Endothelial cell of umbilical vein (primary cell): ENCODE measurements at regions of chr2 and their contacts with region 1.

Region 1: GRCh38 chr2:63861220-63861822 is 19.6 kb downstream of the UGP2 start:
- DNase-seq: peak; percentile 79
- H3K4me3 ChIP-seq: no peak overlapping the region
- H3K27ac ChIP-seq: no peak overlapping the region
- H3K4me1 ChIP-seq: no peaks in the 10 kb centered on the region
- H3K27me3 ChIP-seq: no peaks in the 10 kb centered on the region
- CTCF ChIP-seq: peak; percentile 42 to 50
- POLR2A ChIP-seq: no peak

Region 2: GRCh38 chr2:63692002-63692606 is 169.2 kb before region 1 on chr2:
- CTCF ChIA-PET with region 1: interaction called, 178 read pairs
- POLR2A ChIA-PET with region 1: no interaction called
- dilution Hi-C with region 1: no loop called
- intact Hi-C with region 1: loop called (anchors 1 kb)
- DNase-seq: peak; percentile 78
- H3K4me3 ChIP-seq: no peak overlapping the region
- H3K27ac ChIP-seq: no peak overlapping the region
- H3K4me1 ChIP-seq: no peaks in the 10 kb centered on the region
- H3K27me3 ChIP-seq: no peaks in the 10 kb centered on the region
- CTCF ChIP-seq: peak; percentile 17 to 19
- POLR2A ChIP-seq: no peak

Region 3: GRCh38 chr2:63736354-63736753 is 125.0 kb before region 1 on chr2:
- CTCF ChIA-PET with region 1: interaction called, 11 read pairs
- POLR2A ChIA-PET with region 1: no interaction called
- dilution Hi-C with region 1: no loop called
- intact Hi-C with region 1: no loop called
- DNase-seq: peak; percentile 67
- H3K4me3 ChIP-seq: no peak overlapping the region
- H3K27ac ChIP-seq: peak overlapping the region; percentile 48
- H3K4me1 ChIP-seq: peaks cover 38% of the 10 kb centered on the region
- H3K27me3 ChIP-seq: no peaks in the 10 kb centered on the region
- CTCF ChIP-seq: no peak
- POLR2A ChIP-seq: no peak

Region 4: GRCh38 chr2:63849381-63850203 is 11.7 kb before region 1 on chr2:
- CTCF ChIA-PET with region 1: interaction called, 23 read pairs
- POLR2A ChIA-PET with region 1: no interaction called
- dilution Hi-C with region 1: no loop called
- intact Hi-C with region 1: no loop called
- DNase-seq: no peak
- H3K4me3 ChIP-seq: no peak overlapping the region
- H3K27ac ChIP-seq: no peak overlapping the region
- H3K4me1 ChIP-seq: no peaks in the 10 kb centered on the region
- H3K27me3 ChIP-seq: no peaks in the 10 kb centered on the region
- CTCF ChIP-seq: no peak
- POLR2A ChIP-seq: no peak

Region 5: DNA sequence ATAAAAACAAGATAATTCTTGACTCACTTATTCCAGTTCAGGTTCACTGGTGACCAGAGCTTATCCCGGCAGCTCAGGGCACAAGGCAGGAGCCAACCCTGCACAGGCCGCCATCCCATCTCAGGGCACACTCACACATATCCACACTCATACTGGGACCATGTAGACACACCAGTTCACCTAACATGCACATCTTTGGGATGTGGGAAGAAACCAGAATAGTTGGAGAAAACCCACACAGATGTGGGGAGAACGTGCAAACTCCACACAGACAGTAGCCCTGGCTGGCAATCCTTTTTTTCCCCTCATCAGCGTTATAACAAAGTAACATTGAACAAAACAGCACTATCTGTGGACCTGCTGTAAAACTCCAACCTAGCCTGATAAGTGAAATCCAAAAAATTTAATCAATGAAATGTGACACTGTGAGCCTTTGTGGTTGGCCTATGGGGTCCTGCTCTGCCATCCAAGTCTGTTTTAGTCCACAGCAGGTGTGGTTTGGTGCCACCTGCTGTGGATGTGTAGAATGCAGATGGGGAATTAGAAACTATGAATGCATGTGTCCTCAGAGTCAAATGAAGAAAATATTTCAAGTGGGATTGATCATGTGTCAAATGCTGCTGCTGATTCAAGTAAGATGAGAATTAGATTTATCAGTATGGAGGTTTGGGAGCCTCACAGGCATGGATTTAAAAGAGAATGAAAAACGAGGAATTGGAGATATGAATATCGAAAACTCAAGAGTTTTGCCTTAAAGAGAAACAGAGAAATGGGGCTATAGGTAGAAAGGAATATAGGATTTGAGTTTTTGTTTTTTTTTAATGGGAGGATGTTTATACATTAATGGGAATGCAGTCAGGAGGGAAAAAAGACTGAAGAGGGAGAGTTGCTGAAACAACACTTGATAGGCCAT is 27.4 kb after region 1 on chr2:
- CTCF ChIA-PET with region 1: interaction called, 6 read pairs
- POLR2A ChIA-PET with region 1: no interaction called
- dilution Hi-C with region 1: no loop called
- intact Hi-C with region 1: loop called (anchors 1 kb)
- DNase-seq: peak; percentile 69
- H3K4me3 ChIP-seq: no peak overlapping the region
- H3K27ac ChIP-seq: no peak overlapping the region
- H3K4me1 ChIP-seq: no peaks in the 10 kb centered on the region
- H3K27me3 ChIP-seq: no peaks in the 10 kb centered on the region
- CTCF ChIP-seq: peak; percentile 55 to 68
- POLR2A ChIP-seq: no peak